ENCODE measurements at regions of chr16 and their contacts with region 1.

Region 1: GRCh38 chr16:20372701-20373100 is 20.2 kb upstream of the UMOD start:
- DNase-seq: no peak
- ATAC-seq: no peak
- H3K4me3 ChIP-seq: no peak overlapping the region
- H3K27ac ChIP-seq: no peak overlapping the region
- H3K4me1 ChIP-seq: no peaks in the 10 kb centered on the region
- H3K27me3 ChIP-seq: no peaks in the 10 kb centered on the region
- CTCF ChIP-seq: no peak
- POLR2A ChIP-seq: no peak

Region 2: GRCh38 chr16:19912455-19913339 is 460.0 kb before region 1 on chr16:
- intact Hi-C with region 1: loop called in 1 of 2 experiments (anchors 10 kb)
- DNase-seq: no peak
- ATAC-seq: no peak
- H3K4me3 ChIP-seq: no peak overlapping the region
- H3K27ac ChIP-seq: no peak overlapping the region
- H3K4me1 ChIP-seq: no peaks in the 10 kb centered on the region
- H3K27me3 ChIP-seq: no peaks in the 10 kb centered on the region
- CTCF ChIP-seq: no peak
- POLR2A ChIP-seq: no peak

Region 3: GRCh38 chr16:20268409-20268808 is 104.3 kb before region 1 on chr16:
- intact Hi-C with region 1: no loop called
- DNase-seq: no peak
- ATAC-seq: no peak
- H3K4me3 ChIP-seq: no peak overlapping the region
- H3K27ac ChIP-seq: no peak overlapping the region
- H3K4me1 ChIP-seq: no peaks in the 10 kb centered on the region
- H3K27me3 ChIP-seq: no peaks in the 10 kb centered on the region
- CTCF ChIP-seq: no peak
- POLR2A ChIP-seq: no peak

Region 4: GRCh38 chr16:20300312-20301097 is 72.2 kb before region 1 on chr16:
- intact Hi-C with region 1: no loop called
- DNase-seq: peak; percentile 42 to 66 (median 57)
- ATAC-seq: peak; percentile 98 to 99 (median 98)
- H3K4me3 ChIP-seq: no peak overlapping the region
- H3K27ac ChIP-seq: no peak overlapping the region
- H3K4me1 ChIP-seq: no peaks in the 10 kb centered on the region
- H3K27me3 ChIP-seq: no peaks in the 10 kb centered on the region
- CTCF ChIP-seq: peak; percentile 61 to 79 (median 77)
- POLR2A ChIP-seq: no peak

Measured in right lobe of liver (tissue), 6 donors.